ENCODE measurements at regions of chr6 and their contacts with region 1.

Region 1: DNA sequence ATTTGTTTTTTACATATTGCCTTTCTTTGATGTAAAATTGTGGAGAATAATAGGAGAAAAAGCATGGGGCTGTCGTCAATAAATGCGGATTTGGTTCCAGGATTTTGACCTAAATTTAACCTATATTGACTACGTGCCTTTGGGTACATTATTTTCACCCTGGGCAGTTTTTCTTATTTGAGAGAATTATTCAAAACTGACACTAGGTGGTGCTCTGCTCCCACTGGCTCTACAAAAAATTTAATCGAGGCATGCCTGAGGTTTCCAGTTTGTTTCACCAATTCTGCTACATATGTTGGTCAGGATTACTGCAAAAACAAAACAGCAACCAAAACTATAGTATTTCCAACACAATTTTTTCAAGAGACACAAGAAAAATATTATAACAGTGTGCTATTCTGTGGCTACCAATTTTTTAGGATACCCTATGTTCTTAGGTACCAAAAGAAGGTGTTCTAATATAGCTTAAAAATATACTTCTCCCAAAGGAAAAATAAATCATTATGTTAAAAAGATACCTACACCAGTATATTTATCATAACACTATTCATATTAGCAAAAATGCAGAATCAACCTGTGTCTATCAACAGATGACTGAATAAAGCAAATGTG is 48.6 kb upstream of the FABP7 start:
- DNase-seq: peak; percentile 41
- ATAC-seq: peak; percentile 71
- H3K4me3 ChIP-seq: no peak overlapping the region
- H3K27ac ChIP-seq: no peak overlapping the region
- H3K4me1 ChIP-seq: no peaks in the 10 kb centered on the region
- H3K27me3 ChIP-seq: peaks cover 0 to 11% of the 10 kb centered on the region in 2 experiments; a peak in 2 of 5 replicates
- CTCF ChIP-seq: peak; percentile 78
- EP300 ChIP-seq: no peak
- POLR2A ChIP-seq: no peak
- RAD21 ChIP-seq: peak; percentile 84

Region 2: DNA sequence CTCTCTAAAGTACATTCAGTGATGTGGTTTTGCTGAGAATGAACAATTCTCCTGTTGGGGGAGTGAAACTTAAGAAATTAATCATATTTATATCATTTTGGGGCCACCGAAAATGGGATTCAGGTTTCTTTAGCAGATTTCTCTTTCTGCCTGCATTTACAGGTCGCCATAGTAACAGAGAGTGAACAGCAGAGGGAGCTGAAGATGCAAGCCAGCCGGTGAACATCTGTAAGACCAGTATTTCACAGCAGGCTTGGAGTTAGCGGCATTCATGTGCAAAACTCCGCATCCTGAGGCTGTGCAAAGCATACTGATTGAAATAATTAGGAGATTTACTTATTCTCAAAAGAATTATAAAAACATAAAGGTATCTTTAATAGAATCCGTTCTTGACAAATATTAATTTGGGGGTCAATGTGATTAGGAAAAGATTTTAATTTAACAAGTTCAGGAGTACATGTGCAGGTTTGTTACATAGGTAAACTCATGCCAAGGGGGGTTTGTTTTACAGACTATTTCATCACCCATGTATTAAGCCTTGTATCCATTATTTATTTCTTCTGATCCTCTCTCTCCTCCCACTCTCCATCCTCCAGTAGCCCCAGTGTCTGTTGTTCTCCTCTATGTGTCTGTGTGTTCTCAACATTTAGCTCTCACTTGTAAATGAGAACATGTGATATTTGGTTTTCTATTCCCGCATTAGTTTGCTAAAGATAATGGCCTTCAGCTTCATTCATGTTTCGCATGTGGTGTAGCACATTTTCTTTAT is 349.2 kb before region 1 on chr6:
- CTCF ChIA-PET with region 1: no interaction called
- POLR2A ChIA-PET with region 1: no interaction called
- in situ Hi-C with region 1: no loop called
- intact Hi-C with region 1: loop called (anchors 5 kb)
- DNase-seq: peak; percentile 69
- ATAC-seq: peak; percentile 98
- H3K4me3 ChIP-seq: no peak overlapping the region
- H3K27ac ChIP-seq: no peak overlapping the region
- H3K4me1 ChIP-seq: no peaks in the 10 kb centered on the region
- H3K27me3 ChIP-seq: 0 out of 5 replicates have a peak, but pooled peaks cover 0 to 5% of the 10 kb centered on the region in 2 experiments
- CTCF ChIP-seq: peak; percentile 81
- EP300 ChIP-seq: no peak
- POLR2A ChIP-seq: no peak
- RAD21 ChIP-seq: peak; percentile 46; the same call in 1 of the 2 replicates

Region 3: DNA sequence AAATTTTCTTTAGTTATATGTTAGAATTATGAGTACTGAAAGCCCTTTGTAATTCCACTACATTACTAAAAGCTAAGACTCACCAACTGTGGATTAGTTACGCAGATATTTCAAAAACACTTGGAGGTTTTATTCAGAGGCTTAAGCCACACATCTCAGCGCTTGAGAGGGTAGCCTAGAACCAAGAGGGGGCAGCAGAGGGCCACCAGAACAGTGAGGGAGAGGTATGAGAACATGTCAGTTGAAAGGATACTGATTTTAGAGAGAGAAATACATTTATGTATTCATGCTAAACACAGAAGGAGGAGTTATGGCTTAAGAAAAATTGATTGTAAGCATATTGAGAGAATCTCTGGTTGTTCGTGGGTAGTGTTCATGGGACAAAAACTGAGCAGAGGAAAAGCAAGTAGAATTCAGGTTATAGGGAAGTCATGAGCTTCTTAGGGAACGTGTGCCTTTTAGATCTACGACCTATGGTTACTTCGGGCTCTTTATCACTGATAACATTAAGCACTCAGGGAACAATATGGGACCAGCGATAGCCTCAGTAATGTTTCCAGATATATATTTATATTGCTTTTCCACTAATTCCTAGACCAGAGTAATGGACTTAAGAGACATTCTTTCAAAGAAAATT is 238.8 kb before region 1 on chr6:
- CTCF ChIA-PET with region 1: interaction called, 5 read pairs
- POLR2A ChIA-PET with region 1: no interaction called
- in situ Hi-C with region 1: loop called (anchors 5 kb)
- intact Hi-C with region 1: loop called (anchors 1 kb)
- DNase-seq: peak; percentile 68
- ATAC-seq: peak; percentile 100
- H3K4me3 ChIP-seq: no peak overlapping the region
- H3K27ac ChIP-seq: no peak overlapping the region
- H3K4me1 ChIP-seq: no peaks in the 10 kb centered on the region
- H3K27me3 ChIP-seq: no peaks in the 10 kb centered on the region
- CTCF ChIP-seq: peak; percentile 89
- EP300 ChIP-seq: no peak
- POLR2A ChIP-seq: no peak
- RAD21 ChIP-seq: peak; percentile 67

Region 4: DNA sequence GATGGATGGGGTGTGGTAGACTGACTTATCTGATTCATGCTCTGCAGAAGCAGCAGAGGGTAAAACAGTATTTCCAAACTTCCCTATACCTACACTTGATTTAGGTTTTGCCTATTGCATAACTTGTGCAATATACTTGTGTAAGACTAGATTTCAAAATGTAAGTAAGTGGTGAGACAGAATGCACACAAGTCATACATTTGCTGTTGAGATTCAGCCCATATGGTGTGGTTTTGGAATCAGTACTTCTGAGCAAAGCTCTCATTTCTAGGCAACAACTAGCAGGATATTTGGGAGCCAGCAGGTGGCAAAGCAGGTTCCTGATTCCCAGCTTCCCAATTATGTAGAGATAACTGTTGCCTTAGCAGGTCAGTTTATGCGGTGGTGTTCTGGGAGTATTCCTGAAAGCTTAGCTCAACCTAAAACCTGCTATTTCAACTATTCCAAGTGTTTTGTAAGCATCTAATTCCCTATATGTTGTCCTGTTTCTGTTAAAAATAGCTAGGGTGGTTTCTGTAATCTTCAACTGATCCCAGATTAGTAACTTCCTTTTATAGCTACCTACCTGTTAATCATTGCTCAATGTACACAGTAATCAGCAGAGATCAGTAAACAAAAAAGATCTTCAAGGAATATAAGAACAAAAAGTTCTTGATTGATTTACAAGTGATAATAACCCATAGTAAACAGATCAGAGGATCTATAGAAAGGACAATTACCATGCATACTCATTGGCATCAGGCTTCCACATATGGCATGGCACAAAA is 40.1 kb after region 1 on chr6:
- CTCF ChIA-PET with region 1: interaction called, 3 read pairs
- POLR2A ChIA-PET with region 1: no interaction called
- in situ Hi-C with region 1: no loop called
- intact Hi-C with region 1: loop called (anchors 1 kb)
- DNase-seq: peak; percentile 25
- ATAC-seq: peak; percentile 93
- H3K4me3 ChIP-seq: no peak overlapping the region
- H3K27ac ChIP-seq: no peak overlapping the region
- H3K4me1 ChIP-seq: peaks cover 9% of the 10 kb centered on the region
- H3K27me3 ChIP-seq: no peaks in the 10 kb centered on the region
- CTCF ChIP-seq: peak; percentile 71
- EP300 ChIP-seq: no peak
- POLR2A ChIP-seq: no peak
- RAD21 ChIP-seq: peak; percentile 62

Region 5: DNA sequence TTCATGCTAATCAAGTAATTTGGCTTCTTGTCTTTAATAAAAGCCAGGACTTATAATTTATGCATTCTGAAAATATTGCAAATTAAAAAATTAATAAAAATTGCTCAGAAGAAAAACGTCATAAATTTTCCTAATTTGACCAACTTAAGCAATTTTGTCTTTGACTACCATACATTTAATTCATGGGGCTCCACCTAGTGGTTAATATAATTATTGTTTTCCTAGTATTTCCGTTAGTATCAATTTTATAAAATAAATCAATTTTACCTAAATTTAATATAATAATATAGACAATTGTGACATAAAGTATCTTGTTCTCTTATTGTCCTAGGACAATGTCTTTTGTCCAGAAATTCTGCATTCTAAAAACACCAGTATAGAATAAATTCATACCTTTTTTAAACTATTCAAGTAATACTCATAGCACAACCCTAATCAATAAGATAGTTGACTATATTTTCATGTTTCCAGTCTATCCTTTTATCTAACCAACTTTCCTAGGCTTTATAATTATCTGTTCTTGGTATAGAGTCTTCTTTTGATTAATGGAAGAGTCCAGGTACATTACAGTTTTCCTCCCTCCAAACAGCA is 585.9 kb after region 1 on chr6:
- CTCF ChIA-PET with region 1: interaction called, 3 read pairs
- POLR2A ChIA-PET with region 1: no interaction called
- in situ Hi-C with region 1: loop called (anchors 25 kb)
- intact Hi-C with region 1: loop called (anchors 2 kb)
- DNase-seq: peak; percentile 9
- ATAC-seq: no peak
- H3K4me3 ChIP-seq: no peak overlapping the region
- H3K27ac ChIP-seq: no peak overlapping the region
- H3K4me1 ChIP-seq: no peaks in the 10 kb centered on the region
- H3K27me3 ChIP-seq: no peaks in the 10 kb centered on the region
- CTCF ChIP-seq: 0 out of 2 replicates have a peak, but pooled peaks have one; percentile 21
- EP300 ChIP-seq: no peak
- POLR2A ChIP-seq: no peak
- RAD21 ChIP-seq: no peak

Region 6: DNA sequence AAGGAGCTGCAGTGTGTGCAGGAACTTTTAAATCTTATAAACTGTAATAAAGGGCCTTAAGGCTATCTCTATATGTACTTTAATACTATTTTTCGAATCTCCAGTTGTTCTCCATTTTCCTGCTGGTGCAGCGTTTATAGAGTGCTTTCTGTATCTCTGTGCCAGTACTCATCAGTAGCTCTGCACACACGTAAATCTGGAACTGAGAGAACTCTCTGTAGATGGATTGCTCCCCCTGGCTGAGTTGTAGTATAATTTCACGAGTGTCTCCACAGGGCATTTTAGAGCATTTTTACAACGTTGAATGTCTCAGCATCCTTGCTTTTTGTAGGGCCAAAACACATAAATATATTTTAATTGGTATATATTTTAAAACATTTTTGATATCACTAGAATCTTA is 649.4 kb after region 1 on chr6:
- CTCF ChIA-PET with region 1: no interaction called
- POLR2A ChIA-PET with region 1: no interaction called
- in situ Hi-C with region 1: no loop called
- intact Hi-C with region 1: loop called (anchors 5 kb)
- DNase-seq: peak; percentile 22
- ATAC-seq: peak; percentile 92
- H3K4me3 ChIP-seq: no peak overlapping the region
- H3K27ac ChIP-seq: no peak overlapping the region
- H3K4me1 ChIP-seq: no peaks in the 10 kb centered on the region
- H3K27me3 ChIP-seq: no peaks in the 10 kb centered on the region
- CTCF ChIP-seq: peak; percentile 46
- EP300 ChIP-seq: no peak
- POLR2A ChIP-seq: no peak
- RAD21 ChIP-seq: no peak